Sciatic nerve (tissue), 2 donors: ENCODE measurements at regions of chr13 and their contacts with region 1.

Region 1: DNA sequence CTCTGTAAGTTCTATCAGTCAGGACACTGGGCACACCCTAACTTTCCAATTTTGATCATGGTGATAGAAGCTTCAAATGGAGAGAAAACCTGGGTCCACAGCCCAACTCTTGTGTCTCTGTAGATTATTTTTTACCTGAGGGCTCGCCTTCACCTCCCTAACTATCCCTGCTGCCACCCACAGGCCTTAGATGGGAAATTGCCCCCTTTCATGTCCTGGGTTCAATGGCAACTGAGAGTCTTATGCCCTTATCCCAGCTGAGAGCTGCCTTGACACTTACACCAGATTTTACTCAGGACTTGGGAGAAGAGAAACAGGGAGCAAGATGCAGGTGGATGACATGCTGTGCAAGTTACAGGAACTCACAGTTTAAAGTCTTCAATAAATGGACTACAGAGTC is 81.7 kb downstream of the RAP2A start:
- DNase-seq: no peak
- ATAC-seq: no peak

Region 2: GRCh38 chr13:97030705-97031452 is 484.8 kb before region 1 on chr13:
- intact Hi-C with region 1: loop called (anchors 5 kb)
- DNase-seq: no peak
- ATAC-seq: no peak